ENCODE measurements at regions of chr3 and their contacts with region 1.

Region 1: GRCh38 chr3:11601446-11602238 is 42.1 kb downstream of the VGLL4 start:
- DNase-seq: no peak
- H3K4me3 Mint-ChIP-seq: peak overlapping the region; percentile 73
- H3K27ac Mint-ChIP-seq: peak overlapping the region; percentile 90
- H3K4me1 Mint-ChIP-seq: peaks cover 32% of the 10 kb centered on the region
- H3K27me3 Mint-ChIP-seq: no peaks in the 10 kb centered on the region
- CTCF ChIP-seq: no peak

Region 2: DNA sequence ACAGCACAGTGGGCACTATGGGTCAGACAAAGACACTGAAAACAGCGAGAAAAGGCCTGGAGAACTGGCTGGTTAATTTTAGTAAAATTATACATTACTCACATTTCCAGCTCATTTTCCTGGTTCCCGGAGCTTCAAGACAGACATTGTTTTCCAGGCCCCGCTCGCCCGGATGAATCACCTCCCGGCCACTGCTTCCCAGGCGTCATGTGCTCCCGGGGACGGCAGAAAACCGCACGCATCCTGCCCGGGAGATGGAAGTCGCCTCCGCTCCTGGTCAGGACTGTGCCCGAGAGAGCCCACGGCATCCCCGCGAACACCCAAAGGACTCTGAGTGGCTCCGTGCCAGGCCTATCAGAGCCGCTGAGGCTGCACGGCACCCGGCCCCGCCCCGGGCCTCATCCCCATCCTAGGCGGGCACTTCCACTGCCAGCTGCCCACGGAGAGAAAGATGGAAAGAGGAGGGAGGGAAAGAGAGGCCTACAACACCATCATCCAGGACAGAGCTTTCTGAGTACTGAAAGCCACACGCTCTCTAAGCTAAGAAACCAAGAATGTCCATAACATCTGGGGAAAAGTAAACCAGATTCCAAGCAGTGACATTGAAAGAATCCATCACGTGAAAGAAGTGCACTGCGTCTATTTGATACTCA is 33.0 kb before region 1 on chr3:
- CTCF ChIA-PET with region 1: interaction called, 5 read pairs
- POLR2A ChIA-PET with region 1: interaction called, 18 read pairs
- intact Hi-C with region 1: loop called (anchors 1 kb)
- DNase-seq: peak; percentile 86
- H3K4me3 Mint-ChIP-seq: peak overlapping the region; percentile 76
- H3K27ac Mint-ChIP-seq: peak overlapping the region; percentile 99
- H3K4me1 Mint-ChIP-seq: peaks cover 27% of the 10 kb centered on the region
- H3K27me3 Mint-ChIP-seq: no peaks in the 10 kb centered on the region
- CTCF ChIP-seq: no peak

Region 3: GRCh38 chr3:11582191-11582968 is 19.3 kb before region 1 on chr3:
- CTCF ChIA-PET with region 1: interaction called, 4 read pairs
- POLR2A ChIA-PET with region 1: interaction called, 19 read pairs
- intact Hi-C with region 1: no loop called
- DNase-seq: peak; percentile 85
- H3K4me3 Mint-ChIP-seq: peak overlapping the region; percentile 71
- H3K27ac Mint-ChIP-seq: peak overlapping the region; percentile 82
- H3K4me1 Mint-ChIP-seq: peaks cover 46% of the 10 kb centered on the region
- H3K27me3 Mint-ChIP-seq: no peaks in the 10 kb centered on the region
- CTCF ChIP-seq: no peak

Region 4: DNA sequence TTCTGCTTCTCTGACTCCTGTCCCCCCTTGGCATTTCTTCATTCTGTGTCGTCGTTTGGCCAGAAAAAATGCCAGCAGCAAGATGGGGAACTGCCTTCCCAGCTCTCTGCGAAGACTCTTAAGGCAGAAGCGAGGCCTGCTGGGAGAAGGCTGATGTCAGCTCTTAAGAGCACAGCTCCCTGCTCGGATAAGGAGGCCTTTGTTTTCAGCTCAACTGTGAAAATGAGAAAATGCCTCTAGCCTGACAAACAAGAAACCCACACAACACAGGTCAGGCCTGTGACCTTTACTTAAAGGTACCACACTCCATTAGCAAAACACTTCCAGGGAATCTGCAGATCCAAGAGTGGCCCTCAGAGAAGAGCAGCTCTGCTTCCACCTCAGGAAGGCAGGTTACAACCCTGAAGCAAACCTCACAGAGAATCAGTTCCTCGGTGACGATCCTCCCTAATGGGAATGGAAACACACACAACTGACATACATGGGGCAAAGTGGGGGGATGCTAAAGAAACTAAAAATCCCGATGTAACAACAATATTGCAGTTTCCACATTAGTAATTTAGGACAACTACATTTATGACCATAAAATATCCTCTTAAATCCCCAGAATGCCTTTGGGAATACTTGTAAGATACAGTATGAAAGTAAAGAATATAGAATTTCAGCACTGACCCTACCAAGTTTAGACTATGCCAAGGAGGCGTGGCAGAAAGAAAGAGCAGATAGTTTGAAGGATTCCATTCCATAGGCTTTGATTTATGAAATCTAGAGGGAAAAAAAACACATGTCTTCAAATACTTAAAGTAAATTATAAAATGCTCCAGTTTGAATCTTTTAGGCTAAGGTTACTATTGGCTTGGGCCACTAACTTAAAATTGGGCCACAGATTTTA is 10.0 kb before region 1 on chr3:
- CTCF ChIA-PET with region 1: no interaction called
- POLR2A ChIA-PET with region 1: interaction called, 19 read pairs
- intact Hi-C with region 1: no loop called
- DNase-seq: no peak
- H3K4me3 Mint-ChIP-seq: no peak overlapping the region
- H3K27ac Mint-ChIP-seq: peak overlapping the region; percentile 78
- H3K4me1 Mint-ChIP-seq: peaks cover 42% of the 10 kb centered on the region
- H3K27me3 Mint-ChIP-seq: no peaks in the 10 kb centered on the region
- CTCF ChIP-seq: no peak

Region 5: DNA sequence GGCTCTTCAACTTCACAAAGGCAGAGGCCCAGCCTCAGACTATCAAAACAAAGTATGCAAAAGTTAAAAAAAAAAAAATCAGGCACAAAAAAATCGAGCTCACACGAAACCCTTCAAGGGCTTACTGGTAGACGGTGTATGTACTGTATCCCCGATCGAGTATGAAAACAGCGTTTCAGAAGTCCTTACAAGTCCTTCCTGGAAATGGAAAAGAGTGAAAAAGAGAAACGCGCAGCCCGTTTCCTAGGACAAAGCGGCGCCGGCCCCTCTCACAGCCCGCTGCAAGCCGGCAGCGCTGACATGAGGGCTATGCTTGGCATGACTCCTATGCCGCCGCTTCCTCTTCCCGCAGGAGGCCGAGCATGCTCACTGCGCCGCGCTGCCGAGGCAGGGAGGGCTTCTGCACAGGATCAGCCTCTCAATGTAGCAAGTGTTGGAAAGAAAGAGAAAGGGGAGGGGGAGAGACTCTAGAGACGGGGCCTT is 42.0 kb after region 1 on chr3 and contains the start of gene VGLL4:
- CTCF ChIA-PET with region 1: interaction called, 5 read pairs
- POLR2A ChIA-PET with region 1: interaction called, 14 read pairs
- intact Hi-C with region 1: loop called (anchors 2 kb)
- DNase-seq: peak; percentile 85
- H3K4me3 Mint-ChIP-seq: peak within 1 kb of the TSS; percentile 93
- H3K27ac Mint-ChIP-seq: peak within 1 kb of the TSS; percentile 96
- H3K4me1 Mint-ChIP-seq: peaks cover 21% of the 10 kb centered on the region
- H3K27me3 Mint-ChIP-seq: no peaks in the 10 kb centered on the region
- CTCF ChIP-seq: no peak
- total RNA-seq, gene VGLL4: 31.3 and 31.7 TPM in 2 replicates

Region 6: DNA sequence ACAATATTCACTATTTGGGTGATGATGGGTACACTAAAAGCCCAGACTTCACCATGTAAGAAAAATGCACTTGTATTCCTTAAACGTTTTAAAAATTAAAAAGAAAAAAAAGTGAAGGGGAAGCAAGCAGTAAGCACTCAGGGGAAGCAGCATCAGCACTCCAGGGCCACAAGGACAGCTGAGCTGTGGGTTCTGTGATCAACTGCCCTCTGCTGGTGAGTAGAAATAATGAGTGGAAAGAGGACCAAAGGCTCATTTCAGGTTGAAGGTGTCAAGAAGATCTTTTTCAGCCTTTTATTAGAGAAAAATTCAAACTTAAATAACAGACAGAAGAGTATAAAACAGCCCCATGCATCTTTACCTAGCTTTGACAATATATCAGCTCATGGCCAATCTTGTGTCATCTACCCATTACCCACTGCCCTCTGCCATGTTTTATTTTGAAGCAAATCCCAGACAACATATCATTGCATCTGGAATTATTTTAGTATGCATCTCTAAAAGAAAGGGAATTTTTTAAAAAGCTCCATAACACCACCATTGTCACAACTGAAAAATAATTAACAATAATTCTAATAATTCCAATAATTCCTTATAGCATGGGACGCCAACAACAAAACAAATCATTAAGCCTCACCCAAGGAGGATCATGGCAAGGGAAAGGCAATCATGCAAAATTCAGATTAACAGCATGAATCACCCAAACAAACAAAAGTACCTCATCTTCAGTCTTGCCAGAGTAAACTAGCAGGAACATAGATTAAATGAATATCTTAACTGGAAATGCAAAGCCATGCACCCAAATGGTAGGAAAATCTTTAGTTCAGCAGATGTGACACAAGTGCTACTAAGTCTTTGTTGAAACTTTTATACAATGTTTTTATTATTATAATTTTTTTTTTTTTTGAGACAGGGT is 202.6 kb after region 1 on chr3:
- CTCF ChIA-PET with region 1: no interaction called
- POLR2A ChIA-PET with region 1: no interaction called
- intact Hi-C with region 1: loop called (anchors 1 kb)
- DNase-seq: peak; percentile 64
- H3K4me3 Mint-ChIP-seq: no peak overlapping the region
- H3K27ac Mint-ChIP-seq: no peak overlapping the region
- H3K4me1 Mint-ChIP-seq: no peaks in the 10 kb centered on the region
- H3K27me3 Mint-ChIP-seq: no peaks in the 10 kb centered on the region
- CTCF ChIP-seq: peak; percentile 71